ENCODE measurements at regions of chr5 and their contacts with region 1.

Region 1: GRCh38 chr5:71586941-71587765 is at the start of gene MCCC2:
- DNase-seq: peak; percentile 91
- ATAC-seq: peak; percentile 99
- H3K4me3 ChIP-seq: peak within 1 kb of the TSS; percentile 81
- H3K27ac ChIP-seq: peak within 1 kb of the TSS; percentile 72
- H3K4me1 ChIP-seq: peaks cover 20% of the 10 kb centered on the region
- H3K27me3 ChIP-seq: no peaks in the 10 kb centered on the region
- CTCF ChIP-seq: no peak
- total RNA-seq, gene MCCC2: 31.7 and 32.2 TPM in 2 replicates

Region 2: DNA sequence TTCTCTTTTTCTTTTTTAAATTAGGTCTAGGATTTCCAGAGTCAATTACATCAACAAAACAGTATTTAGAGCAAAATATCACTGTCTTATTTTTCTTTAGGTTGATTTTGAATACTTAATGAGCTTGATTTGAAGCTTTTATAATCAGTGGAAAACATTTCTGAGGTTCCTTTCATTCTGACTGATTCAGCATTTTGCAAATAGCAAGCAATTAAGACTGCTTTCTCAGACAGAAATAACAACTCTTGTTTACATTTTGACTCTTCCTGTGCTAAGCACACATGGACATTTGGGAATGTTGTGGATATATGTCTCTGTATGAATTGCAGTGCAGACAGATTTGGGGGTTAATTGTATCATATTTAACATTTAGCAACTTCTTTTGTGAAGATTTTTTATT is 22.3 kb before region 1 on chr5:
- CTCF ChIA-PET with region 1: no interaction called
- POLR2A ChIA-PET with region 1: no interaction called
- intact Hi-C with region 1: loop called (anchors 1 kb)
- DNase-seq: no peak
- ATAC-seq: no peak
- H3K4me3 ChIP-seq: no peak overlapping the region
- H3K27ac ChIP-seq: no peak overlapping the region
- H3K4me1 ChIP-seq: no peaks in the 10 kb centered on the region
- H3K27me3 ChIP-seq: no peaks in the 10 kb centered on the region
- CTCF ChIP-seq: no peak

Region 3: DNA sequence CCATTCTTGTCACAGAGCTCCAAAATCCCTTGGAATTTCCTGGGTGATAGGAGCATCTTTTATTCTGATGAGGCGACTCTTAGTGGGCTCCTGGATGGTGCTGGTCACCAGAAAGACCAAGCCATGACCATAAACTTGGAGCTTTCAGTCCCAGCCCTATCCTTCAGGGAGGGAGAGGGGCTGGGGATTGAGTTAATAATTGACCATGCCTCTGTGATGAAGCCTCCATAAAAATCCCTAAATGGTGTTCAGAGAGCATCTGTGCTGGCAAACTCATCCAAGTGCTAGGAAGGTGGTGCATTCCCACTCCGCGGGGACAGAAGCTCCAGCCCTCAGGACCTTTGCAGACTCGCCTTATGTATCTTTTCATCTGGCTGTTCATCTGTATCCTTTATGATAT is 28.7 kb after region 1 on chr5:
- CTCF ChIA-PET with region 1: no interaction called
- POLR2A ChIA-PET with region 1: no interaction called
- intact Hi-C with region 1: no loop called
- DNase-seq: no peak
- ATAC-seq: no peak
- H3K4me3 ChIP-seq: no peak overlapping the region
- H3K27ac ChIP-seq: no peak overlapping the region
- H3K4me1 ChIP-seq: no peaks in the 10 kb centered on the region
- H3K27me3 ChIP-seq: no peaks in the 10 kb centered on the region
- CTCF ChIP-seq: no peak

Region 4: DNA sequence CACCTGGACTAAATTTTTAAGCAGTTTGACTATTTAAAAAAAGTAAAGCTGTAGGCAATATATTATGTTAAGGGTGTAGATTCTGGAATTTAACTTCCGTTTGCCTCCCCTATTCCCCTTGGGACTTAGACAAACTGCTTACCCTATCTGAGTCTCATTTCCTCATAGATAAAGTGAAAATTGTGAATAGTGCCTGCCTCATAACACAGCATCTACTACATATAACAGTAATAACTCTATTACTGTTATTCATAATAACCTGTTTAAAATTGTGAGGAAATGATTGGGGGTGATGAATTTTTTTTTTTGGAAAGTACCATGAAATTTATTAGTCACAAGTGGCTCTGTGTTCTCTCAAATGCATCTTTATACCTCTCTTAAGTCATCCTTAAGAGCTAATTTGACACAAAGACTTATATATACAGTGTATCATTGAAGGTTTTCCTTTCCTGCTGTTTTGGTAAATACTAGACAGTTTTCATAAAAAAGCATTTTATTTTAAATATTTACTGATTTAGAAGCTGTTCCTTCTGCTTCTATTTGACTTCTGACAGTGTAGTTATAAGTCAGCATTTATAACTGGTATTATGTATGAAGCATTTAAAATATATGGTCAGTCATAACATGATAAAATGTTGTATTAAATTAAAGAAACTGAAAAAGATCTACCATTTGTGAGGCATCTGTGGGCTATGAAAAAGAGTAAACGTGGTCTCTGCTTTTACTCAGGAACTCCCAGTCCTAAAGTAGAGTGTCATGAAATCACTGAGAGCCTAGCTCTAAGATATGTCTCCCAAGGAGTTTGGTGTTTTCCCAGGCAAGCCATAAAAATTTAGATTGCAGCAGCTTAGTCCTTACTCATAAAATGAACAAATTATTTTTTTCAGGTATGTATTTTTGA is 46.4 kb after region 1 on chr5:
- CTCF ChIA-PET with region 1: no interaction called
- POLR2A ChIA-PET with region 1: no interaction called
- intact Hi-C with region 1: no loop called
- DNase-seq: no peak
- ATAC-seq: no peak
- H3K4me3 ChIP-seq: no peak overlapping the region
- H3K27ac ChIP-seq: no peak overlapping the region
- H3K4me1 ChIP-seq: no peaks in the 10 kb centered on the region
- H3K27me3 ChIP-seq: no peaks in the 10 kb centered on the region
- CTCF ChIP-seq: no peak

Region 5: GRCh38 chr5:71757590-71758543 is 170.7 kb after region 1 on chr5:
- CTCF ChIA-PET with region 1: no interaction called
- POLR2A ChIA-PET with region 1: no interaction called
- intact Hi-C with region 1: no loop called
- DNase-seq: peak; percentile 72
- ATAC-seq: peak; percentile 100
- H3K4me3 ChIP-seq: peak overlapping the region; percentile 50
- H3K27ac ChIP-seq: no peak overlapping the region
- H3K4me1 ChIP-seq: no peaks in the 10 kb centered on the region
- H3K27me3 ChIP-seq: peaks cover 4% of the 10 kb centered on the region; the same call in 1 of the 2 replicates
- CTCF ChIP-seq: peak; percentile 80

Measured in PC-3 (cell line).